Esophagus muscularis mucosa (tissue), 4 donors: ENCODE measurements at regions of chr6 and their contacts with region 1.

Region 1: GRCh38 chr6:158686791-158687381 is 37.0 kb downstream of the SYTL3 start:
- DNase-seq: no peak
- H3K4me3 ChIP-seq: no peak overlapping the region
- H3K27ac ChIP-seq: peak overlapping the region in 1 of 4 donors; percentile 30
- H3K4me1 ChIP-seq: peaks cover 0 to 33% (median 23%) of the 10 kb centered on the region in 4 donors
- H3K27me3 ChIP-seq: no peaks in the 10 kb centered on the region
- CTCF ChIP-seq: no peak
- EP300 ChIP-seq: no peak
- POLR2A ChIP-seq: no peak

Region 2: DNA sequence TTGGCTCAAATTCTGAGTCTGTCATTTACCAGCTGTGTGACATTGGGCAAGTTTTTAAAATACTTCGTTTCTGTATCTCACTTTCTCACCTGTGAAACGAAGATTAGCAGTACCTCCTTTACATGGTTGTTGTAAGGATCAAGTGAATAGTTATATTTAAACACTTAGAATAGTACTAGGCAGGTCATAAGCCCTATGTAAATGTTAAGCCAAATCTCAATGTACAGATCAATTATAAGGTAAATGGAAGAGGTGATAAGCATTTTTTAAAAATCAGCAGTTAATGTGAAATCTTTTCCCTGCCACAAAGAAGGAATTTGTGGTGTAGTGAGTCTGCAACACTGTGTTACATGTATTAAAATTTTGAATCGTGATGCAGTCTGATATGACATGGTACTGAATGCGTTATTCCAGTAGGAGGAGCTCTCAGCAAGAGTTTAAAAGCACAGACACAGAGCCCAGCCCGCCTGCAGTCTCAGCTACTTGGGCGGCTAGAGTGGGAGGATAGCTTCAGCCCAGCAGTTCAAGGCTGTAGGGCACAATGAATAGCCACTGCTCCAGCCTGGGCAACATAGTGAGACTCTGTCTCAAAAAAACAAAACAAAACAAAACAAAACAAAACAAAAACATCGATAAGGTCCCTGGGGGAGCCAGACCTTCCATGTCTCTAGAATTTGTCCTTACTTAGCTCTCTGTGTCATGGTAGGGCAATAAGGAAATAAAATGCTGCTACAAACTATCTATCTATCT is 472.8 kb before region 1 on chr6:
- intact Hi-C with region 1: loop called (anchors 10 kb)
- DNase-seq: no peak
- H3K4me3 ChIP-seq: no peak overlapping the region
- H3K27ac ChIP-seq: no peak overlapping the region
- H3K4me1 ChIP-seq: no peaks in the 10 kb centered on the region
- H3K27me3 ChIP-seq: peaks cover 0 to 7% (median 0%) of the 10 kb centered on the region in 4 donors
- CTCF ChIP-seq: peak; percentile 56 to 79 (median 73)
- EP300 ChIP-seq: no peak
- POLR2A ChIP-seq: no peak